Activated CD4-positive, alpha-beta memory T cell treated with anti-CD3 and anti-CD28 coated beads for 36 hours (primary cell): ENCODE measurements at regions of chr5 and their contacts with region 1.

Region 1: DNA sequence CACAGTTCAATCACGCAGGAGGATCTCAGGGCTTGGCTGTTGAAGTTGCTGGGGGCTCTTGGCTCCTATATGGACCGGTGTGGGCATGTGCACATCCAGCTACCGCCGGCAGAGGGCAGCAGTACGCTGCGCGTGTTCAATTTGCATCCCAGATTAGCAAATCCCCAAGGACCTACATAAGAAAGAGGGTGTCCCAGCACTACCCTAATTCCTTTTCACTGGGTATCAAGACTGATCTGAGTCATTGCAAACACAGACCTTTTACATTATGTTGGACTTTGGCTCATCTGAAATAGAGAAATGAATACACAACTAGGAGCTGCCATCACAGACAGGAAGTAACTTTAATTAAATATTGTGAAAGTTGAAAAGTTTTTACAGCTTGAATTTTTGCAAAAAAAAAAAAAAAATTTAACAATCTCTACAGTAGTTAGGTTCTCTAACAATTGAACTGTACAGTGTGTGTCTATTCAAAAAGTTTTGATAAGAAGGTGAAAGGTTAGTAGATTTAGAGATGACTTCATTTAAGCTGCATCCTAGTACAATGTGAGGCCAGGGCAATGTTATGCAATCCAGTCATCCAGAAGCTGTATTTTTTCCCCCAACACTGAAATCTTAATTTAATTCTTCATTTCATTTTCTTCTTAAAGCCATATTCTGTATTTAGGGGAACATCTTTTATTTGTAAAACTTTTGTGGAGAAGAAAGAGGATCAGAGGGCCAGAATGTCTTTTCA is 404.0 kb downstream of the EBF1 start:
- DNase-seq: peak; percentile 75
- H3K4me3 Mint-ChIP-seq: no peak overlapping the region
- H3K27ac Mint-ChIP-seq: no peak overlapping the region
- H3K4me1 Mint-ChIP-seq: peaks cover 2% of the 10 kb centered on the region
- H3K27me3 Mint-ChIP-seq: peaks cover 8% of the 10 kb centered on the region

Region 2: DNA sequence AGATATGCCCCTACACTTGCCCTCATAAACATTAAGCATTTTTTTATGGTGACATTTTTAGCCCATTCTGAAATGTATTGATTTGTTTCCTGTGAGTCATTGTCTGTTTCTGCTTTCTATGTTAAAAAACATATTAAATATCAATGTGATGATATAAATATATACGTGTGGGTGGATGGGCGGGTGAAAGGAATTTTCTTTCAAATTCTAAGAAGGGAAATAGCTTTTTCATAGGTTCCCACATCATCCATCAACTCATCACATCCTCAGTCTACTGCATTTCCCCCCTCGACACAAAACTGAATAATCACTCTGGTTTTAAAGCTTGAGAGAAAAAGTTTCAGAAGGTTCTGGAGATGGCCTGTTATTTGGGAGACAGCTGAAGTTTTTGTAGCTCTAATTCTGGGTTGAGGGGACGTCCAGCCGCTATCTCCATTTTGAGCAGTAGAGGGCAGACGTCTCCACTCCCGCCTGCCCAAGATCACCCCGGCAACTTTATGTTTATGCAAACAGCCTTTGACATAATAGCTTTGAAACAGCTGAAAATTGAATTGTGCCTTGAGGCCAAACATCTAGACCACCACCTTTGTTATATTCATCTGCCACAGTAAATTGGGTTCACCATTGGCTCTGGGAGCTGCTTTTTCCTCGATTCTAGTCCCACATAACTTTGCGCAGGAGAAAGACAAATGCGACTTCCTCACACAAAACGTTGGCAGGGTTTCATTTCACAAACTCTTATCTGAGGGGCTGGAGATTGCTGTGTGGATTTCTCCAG is 620.6 kb before region 1 on chr5:
- CTCF ChIA-PET with region 1: interaction called, 5 read pairs
- POLR2A ChIA-PET with region 1: no interaction called
- intact Hi-C with region 1: loop called (anchors 10 kb)
- DNase-seq: peak; percentile 61
- H3K4me3 Mint-ChIP-seq: no peak overlapping the region
- H3K27ac Mint-ChIP-seq: no peak overlapping the region
- H3K4me1 Mint-ChIP-seq: peaks cover 5% of the 10 kb centered on the region
- H3K27me3 Mint-ChIP-seq: peaks cover 6% of the 10 kb centered on the region

Region 3: GRCh38 chr5:158682631-158683030 is 13.1 kb before region 1 on chr5:
- CTCF ChIA-PET with region 1: interaction called, 13 read pairs
- POLR2A ChIA-PET with region 1: no interaction called
- intact Hi-C with region 1: no loop called
- DNase-seq: no peak
- H3K4me3 Mint-ChIP-seq: no peak overlapping the region
- H3K27ac Mint-ChIP-seq: no peak overlapping the region
- H3K4me1 Mint-ChIP-seq: no peaks in the 10 kb centered on the region
- H3K27me3 Mint-ChIP-seq: peaks cover 18% of the 10 kb centered on the region

Region 4: GRCh38 chr5:159100025-159100781 is 404.4 kb after region 1 on chr5:
- CTCF ChIA-PET with region 1: interaction called, 412 read pairs
- POLR2A ChIA-PET with region 1: no interaction called
- intact Hi-C with region 1: no loop called
- DNase-seq: peak; percentile 90
- H3K4me3 Mint-ChIP-seq: peak overlapping the region; percentile 79
- H3K27ac Mint-ChIP-seq: peak overlapping the region; percentile 31
- H3K4me1 Mint-ChIP-seq: peaks cover 35% of the 10 kb centered on the region
- H3K27me3 Mint-ChIP-seq: peaks cover 58% of the 10 kb centered on the region

Region 5: DNA sequence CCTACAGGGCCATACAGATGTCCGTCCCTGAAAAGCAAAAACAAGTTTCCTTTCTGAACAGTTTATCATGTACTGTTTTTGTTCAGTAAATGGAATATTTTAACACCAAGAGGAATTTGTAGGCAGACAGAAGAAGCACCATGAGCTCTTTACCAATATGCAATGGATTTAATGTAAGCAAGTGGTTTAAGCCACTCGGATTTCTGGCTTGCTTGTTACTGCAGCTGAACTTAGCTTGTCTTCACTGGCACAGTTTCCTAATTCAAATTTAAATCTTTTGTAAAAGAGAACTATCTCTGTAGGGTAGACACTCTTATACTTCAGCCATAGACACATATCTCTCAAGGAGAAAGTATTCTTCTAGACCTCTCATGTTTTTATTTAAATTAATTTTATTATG is 416.7 kb after region 1 on chr5:
- CTCF ChIA-PET with region 1: interaction called, 412 read pairs
- POLR2A ChIA-PET with region 1: no interaction called
- intact Hi-C with region 1: no loop called
- DNase-seq: no peak
- H3K4me3 Mint-ChIP-seq: no peak overlapping the region
- H3K27ac Mint-ChIP-seq: no peak overlapping the region
- H3K4me1 Mint-ChIP-seq: no peaks in the 10 kb centered on the region
- H3K27me3 Mint-ChIP-seq: peaks cover 9% of the 10 kb centered on the region